Mammary epithelial cell (primary cell): ENCODE measurements at regions of chr5 and their contacts with region 1.

Region 1: GRCh38 chr5:168409580-168410458 is 76.5 kb upstream of the RARS1 start:
- DNase-seq: peak; percentile 79
- H3K4me3 ChIP-seq: peak overlapping the region in 1 of 3 experiments; percentile 11
- H3K27ac ChIP-seq: peak overlapping the region; percentile 70
- H3K4me1 ChIP-seq: peaks cover 54% of the 10 kb centered on the region
- H3K27me3 ChIP-seq: no peaks in the 10 kb centered on the region
- CTCF ChIP-seq: no peak

Region 2: GRCh38 chr5:168346441-168346840 is 63.4 kb before region 1 on chr5:
- CTCF ChIA-PET with region 1: no interaction called
- dilution Hi-C with region 1: loop called (anchors 5 kb)
- in situ Hi-C with region 1: no loop called
- intact Hi-C with region 1: no loop called
- DNase-seq: peak; percentile 81
- H3K4me3 ChIP-seq: no peak overlapping the region
- H3K27ac ChIP-seq: no peak overlapping the region
- H3K4me1 ChIP-seq: peaks cover 31% of the 10 kb centered on the region
- H3K27me3 ChIP-seq: no peaks in the 10 kb centered on the region
- CTCF ChIP-seq: no peak

Region 3: GRCh38 chr5:168455201-168455600 is 45.4 kb after region 1 on chr5:
- CTCF ChIA-PET with region 1: no interaction called
- dilution Hi-C with region 1: loop called (anchors 5 kb)
- in situ Hi-C with region 1: no loop called
- intact Hi-C with region 1: no loop called
- DNase-seq: no peak
- H3K4me3 ChIP-seq: no peak overlapping the region
- H3K27ac ChIP-seq: no peak overlapping the region
- H3K4me1 ChIP-seq: no peaks in the 10 kb centered on the region
- H3K27me3 ChIP-seq: no peaks in the 10 kb centered on the region
- CTCF ChIP-seq: no peak